ENCODE measurements at regions of chr1 and their contacts with region 1.

Region 1: DNA sequence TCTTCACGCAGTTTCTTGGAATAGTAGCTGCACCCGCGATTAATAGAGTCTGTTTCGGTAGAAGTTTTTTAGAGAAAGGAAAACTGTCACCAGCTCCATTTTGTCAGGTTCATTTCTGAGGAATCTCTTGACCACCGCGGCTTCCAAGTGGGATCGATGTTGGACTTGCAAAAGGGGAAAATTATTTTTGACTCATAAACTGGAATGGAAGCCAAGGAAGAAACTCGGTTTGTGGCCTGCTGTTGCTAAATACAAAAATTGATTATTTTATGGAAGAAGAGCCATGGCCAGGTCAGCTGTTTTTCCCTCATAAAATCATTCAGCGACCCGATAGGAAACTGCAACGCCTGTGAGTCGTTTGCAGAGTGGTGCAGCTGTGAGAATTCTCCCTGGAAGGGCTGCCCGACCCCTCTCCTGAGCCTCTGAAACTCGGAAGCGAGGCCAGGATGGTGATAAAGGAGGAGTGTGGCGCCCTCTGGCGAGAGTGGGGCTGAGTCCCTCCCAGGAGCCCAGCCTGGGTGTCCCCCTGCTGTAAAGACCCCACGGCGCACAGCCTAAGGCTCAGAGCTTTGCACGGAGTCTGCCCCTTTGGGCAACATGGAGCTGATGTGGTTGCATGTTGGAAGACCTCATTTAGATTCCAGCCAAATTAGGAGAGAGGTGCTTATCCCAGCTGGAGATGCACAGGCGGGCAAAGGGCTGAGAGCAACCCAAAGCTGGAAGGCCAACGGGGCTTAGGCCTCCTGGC is 83.6 kb upstream of the SLC25A33 start:
- DNase-seq: no peak
- H3K4me3 ChIP-seq: no peak overlapping the region
- H3K27me3 ChIP-seq: peaks cover 2% of the 10 kb centered on the region
- CTCF ChIP-seq: peak; percentile 89

Region 2: DNA sequence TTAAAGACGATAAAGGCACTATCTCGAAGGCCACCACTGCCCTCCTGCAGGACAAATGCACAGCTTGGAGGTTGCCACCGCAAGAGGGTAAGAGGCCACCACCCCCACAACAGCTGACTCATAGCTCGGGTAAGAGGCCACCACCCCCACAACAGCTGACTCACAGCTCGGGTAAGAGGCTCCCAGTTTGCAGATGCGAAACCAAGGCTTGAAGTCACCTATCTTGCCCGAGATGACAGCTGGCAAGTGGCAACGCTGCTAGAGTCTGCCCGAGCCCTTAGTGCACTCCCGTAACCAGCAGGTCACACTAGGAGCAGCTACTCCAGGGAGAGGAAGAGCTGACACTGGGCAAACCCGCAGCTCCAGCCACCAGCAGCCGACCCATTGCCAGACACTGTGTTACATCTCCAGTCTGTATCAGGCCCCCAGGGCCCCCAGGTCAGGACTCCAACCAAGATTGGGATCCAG is 180.1 kb before region 1 on chr1:
- CTCF ChIA-PET with region 1: interaction called, 65 read pairs
- POLR2A ChIA-PET with region 1: no interaction called
- DNase-seq: no peak
- H3K4me3 ChIP-seq: no peak overlapping the region
- H3K27me3 ChIP-seq: no peaks in the 10 kb centered on the region
- CTCF ChIP-seq: no peak

Region 3: DNA sequence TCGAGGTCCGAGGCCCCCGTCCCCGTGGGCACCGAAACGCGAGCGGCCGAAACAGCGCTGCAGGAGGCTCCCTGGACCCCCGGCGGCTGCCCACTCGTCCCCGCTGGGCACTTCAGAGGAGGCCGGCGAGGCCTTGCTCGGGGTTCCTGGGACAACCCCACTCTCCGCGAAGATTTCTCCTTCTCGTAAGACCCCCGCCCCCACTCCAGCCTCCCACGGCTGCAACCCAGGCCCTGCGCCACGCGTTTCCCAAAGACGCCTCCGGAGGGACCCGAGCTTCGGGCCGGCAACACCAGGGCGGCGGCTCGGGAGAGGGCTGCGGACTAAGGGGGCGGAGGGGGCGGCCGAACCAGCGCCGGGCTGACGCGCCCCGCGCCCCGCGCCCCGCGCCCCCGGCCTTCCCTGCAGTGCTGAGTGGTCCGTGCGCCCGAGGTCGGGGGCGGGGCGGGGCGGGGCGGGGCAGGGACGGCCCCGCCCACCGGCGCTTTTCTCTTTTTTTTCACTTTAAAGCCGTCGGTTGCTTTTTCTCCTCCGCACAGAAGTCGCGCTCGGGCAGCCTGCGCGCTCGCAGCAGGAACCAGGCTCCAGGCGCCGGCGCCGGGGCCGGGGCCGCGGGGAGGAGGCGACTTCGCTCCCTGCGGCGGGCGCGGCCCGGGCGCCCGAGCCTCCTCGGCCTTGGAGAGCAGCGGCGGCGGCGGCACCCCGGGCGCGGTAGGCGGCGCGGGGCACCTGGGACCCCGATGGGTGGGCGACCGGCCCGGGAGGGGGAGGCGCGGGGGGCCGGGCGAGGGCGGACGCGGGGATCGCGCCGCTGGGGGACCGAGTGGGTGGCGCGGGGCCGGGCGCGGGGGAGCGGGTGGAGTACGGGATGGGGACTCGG is 163.1 kb before region 1 on chr1 and contains the start of gene SPSB1:
- CTCF ChIA-PET with region 1: interaction called, 102 read pairs
- POLR2A ChIA-PET with region 1: interaction called, 8 read pairs
- DNase-seq: no peak
- H3K4me3 ChIP-seq: peak within 1 kb of the TSS; percentile 60
- H3K27me3 ChIP-seq: no peaks in the 10 kb centered on the region
- CTCF ChIP-seq: no peak
- polyA plus RNA-seq, gene SPSB1: 15.1 and 19.8 TPM in 2 replicates

Region 4: DNA sequence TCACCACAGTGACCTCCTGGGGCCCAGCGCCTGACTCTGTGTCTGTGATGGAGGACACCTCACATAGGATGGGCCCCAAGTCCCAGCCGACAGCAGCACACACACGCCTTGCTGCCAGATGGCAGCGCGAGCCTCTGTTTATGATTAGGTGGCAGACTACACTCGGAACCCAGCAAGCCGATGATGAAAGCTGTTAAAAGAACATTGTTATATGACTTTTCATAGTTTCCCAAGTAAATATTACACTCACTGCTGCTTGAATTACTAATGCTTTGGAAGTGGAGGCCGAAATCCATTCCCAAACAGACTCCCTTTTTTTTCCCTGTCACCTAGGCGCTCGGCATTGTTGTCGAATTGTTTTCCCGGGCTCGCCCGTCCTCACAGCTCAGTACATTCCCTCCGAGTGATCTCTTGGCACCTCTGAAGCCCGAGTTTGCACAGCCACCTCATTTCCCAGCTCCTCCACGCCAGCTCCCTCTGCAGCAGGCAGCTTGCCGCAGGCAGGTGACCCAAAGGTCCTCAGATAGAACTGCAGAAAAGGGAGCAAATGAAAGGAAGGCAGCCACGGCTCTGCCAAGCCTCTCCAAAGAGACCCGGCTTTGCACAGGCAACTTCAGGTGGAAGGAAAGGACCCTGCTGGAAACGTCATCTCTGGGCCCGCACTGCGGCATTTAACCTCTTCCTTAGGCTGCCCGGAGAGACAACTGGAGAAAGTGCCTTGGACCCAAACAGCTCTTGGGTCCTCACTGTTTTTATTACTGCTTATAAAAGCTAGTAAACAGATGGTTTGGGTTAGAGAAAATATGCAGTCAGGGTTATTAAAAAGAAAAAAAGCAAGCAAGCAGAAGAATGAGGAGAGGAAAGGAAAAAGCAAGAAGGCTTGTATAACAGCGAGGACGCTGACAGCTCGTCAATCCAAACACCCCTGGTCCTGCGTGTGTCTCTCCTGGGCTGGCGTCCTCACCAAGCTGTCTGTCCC is 11.4 kb after region 1 on chr1:
- CTCF ChIA-PET with region 1: interaction called, 31 read pairs
- POLR2A ChIA-PET with region 1: no interaction called
- DNase-seq: peak; percentile 44
- H3K4me3 ChIP-seq: peak overlapping the region; percentile 14; the same call in 1 of the 2 replicates
- H3K27me3 ChIP-seq: peaks cover 7% of the 10 kb centered on the region
- CTCF ChIP-seq: no peak

Region 5: DNA sequence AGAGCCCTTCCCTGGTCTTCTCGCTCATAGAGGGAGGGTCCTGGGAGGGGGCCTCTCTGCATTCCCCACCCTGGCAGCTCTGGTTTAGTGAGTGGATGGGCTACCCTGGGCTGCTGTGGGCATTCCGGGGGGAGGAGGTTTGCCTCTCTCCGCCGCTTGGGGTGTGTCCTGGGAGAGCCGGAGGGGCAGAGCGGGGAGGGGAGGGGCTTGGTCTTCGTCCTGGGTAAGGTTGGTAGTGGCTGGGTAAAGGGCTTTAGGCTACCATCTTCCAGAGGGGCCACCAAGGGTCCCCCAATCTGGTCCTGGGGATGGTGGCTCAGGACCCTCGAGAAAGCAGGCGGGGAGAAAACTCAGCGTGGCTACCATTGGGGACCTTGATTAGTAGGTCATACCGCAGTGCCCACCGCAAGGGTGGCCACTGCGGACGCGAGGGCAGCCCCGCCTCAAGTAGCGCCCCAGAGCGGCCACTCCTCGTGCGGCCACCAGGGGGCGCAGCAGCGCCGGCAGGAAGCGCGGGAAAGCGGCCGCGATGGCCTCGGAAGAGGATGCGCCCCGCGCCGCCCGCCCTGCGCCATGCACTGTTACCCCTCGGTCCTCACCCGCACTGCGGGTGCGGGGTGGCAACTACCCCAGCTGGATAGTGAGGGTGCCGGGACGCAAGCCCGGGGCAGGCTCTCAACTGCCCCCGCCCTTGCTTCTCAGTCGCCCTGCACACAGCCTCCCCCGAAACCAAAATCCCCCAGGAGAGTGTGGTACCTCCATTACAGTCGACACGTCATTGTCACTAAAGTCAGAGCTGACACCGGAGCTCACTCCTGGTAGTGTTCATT is 39.5 kb after region 1 on chr1:
- CTCF ChIA-PET with region 1: interaction called, 16 read pairs
- POLR2A ChIA-PET with region 1: no interaction called
- DNase-seq: no peak
- H3K4me3 ChIP-seq: peak overlapping the region; percentile 27; the same call in 1 of the 2 replicates
- H3K27me3 ChIP-seq: no peaks in the 10 kb centered on the region; the same call in 1 of the 2 replicates
- CTCF ChIP-seq: peak; percentile 81

Measured in BJ (cell line).